ENCODE measurements at regions of chr21 and their contacts with region 1.

Region 1: DNA sequence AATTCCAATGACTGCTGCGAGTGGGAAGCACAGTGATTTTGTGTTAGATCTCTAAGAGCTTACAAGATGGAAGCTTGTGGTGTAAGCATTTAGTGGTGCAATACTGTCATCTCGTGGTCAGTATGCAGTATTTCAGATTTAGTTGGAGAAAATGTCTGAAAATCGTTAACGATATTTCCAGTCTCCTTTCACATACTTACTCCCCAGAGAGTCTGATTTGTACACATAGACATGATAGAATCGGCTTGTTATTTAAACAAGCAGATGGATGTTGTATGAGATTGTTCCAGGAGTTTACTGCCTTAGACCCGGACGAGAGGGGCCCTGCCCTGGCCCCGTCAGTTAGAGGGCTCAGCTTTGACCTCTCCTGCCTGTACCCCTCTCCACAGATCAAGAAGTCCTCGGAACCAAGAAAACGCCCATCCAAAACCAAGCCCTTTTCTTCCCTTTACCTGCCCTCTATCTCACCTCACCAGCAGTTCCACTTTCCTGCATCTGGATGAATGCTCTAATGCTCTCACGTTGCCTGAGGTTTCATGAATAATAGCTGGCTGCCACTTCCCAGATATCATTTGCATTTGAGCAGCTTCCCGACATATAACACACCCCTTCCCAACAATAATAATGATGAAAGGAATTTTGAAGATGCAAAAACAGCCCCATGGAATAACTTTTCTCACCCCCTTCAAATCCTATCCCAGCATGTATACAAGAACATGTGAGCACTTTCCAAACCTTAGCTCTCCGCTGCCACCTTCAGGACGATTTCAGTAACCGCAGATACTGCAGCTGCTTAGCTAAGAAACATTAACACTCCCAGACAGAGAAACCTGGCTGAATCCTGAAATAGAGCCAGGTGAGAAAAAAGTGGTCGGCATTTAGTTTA is 247.3 kb downstream of the LTN1 start:
- DNase-seq: peak; percentile 70
- ATAC-seq: peak; percentile 94

Region 2: DNA sequence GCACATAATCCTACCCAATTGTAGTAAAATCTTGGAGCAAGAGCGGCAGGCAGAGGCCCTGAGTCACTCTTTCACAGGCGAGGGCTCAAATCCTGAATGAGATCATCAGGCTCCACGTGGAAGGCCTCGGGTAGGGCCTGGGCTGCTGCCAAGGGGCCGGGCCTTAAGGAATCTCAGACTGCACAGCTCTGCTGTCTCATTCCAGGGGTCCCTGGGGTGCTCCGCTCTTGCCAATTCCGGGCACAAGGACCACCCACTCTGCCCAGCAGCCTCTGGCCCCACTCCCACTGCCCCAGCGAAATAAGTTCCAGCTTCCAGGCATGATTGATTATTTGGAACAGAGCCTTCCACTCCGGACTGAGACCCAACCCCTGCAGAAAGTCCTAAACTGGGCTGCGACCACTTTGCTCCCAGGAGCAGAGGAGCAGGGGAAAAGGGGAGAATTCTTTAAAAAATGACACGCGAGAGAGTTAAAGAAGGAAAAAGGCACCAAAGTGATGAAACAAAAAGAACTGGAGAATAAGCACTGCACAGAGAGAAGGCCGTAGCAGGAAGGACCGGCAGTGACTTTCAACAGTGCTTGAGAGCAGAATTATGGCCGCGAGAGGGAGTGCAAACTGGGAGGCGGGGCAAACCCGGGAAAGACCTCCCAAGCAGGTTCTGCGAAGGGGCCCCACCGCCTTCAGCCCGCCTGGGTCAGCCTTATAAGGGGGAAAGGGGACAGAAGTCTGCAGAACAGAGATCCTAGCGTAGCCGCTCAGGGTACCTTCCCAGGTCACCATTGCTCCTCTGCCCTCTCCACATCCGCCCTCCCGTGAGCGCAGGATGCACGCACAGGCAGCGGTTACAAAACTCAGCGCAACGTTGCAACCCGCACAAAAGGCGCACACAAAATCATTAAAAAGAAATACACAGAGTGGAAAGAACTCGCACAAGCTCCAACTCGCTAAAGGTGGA is 1902.1 kb before region 1 on chr21:
- intact Hi-C with region 1: loop called (anchors 5 kb)
- DNase-seq: peak; percentile 96
- ATAC-seq: peak; percentile 60

Region 3: DNA sequence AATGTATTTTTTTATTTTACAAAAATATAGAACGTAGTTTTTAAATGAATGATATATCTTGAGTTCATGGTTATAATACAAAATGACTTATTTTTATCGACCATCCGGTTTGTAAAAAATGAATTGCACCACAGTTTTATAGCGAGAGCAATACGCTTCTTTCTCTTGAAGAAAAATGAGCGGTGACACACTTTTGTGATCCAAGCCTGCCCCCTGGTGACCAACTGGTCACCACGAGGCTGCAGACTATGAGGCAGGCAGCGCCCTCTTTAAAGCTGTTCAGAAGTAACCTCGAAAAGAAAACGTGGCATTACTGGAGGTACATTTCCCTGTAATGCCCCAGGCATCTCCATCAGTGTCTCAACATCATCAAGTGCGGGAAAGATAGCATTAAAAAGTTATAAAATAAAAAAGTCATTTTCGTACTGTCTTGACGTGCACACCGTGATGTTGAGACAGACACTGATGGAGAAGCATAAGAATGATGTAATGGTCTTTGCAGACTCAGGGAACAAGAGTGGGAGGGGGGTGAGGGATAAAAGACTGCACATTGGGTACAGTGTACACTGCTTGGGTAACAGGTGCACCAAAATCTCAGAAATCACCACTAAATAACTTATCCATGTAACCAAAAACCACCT is 1044.3 kb before region 1 on chr21:
- intact Hi-C with region 1: loop called (anchors 5 kb)
- DNase-seq: peak; percentile 86
- ATAC-seq: peak; percentile 94

Region 4: DNA sequence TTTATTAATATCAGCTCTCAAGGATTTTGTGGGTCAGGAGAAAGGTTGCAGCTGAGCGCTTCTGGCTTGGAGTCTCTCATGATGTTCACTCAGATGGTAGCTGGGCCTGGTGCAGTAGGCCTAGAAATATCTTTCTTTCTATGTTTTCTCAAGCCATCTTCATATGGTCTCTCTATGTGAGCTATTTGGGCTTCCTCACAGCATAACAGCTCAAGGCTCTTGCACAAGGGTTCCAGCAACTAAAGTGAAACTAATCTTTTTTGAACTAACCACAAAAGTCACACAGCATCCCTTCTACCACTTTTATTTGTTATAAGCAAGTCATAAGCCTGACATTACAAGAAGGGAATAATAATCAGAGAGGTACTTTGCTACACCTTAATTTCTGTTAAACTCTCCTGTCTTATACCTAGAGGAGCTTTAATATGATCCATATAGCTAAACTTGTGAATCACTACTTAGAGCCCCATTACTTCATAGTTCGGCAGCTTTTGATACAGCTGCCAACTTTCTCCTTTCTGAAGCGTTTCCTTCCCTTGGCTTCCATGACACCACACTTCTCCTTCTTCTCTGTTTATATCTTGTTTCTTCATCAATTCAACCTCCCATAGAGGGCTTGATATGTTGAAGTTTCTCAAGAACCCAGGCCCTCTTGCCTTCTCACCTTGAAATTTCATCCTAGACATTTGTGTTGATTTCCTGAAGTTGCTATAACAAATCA is 472.9 kb before region 1 on chr21:
- intact Hi-C with region 1: no loop called
- DNase-seq: no peak
- ATAC-seq: no peak

Region 5: DNA sequence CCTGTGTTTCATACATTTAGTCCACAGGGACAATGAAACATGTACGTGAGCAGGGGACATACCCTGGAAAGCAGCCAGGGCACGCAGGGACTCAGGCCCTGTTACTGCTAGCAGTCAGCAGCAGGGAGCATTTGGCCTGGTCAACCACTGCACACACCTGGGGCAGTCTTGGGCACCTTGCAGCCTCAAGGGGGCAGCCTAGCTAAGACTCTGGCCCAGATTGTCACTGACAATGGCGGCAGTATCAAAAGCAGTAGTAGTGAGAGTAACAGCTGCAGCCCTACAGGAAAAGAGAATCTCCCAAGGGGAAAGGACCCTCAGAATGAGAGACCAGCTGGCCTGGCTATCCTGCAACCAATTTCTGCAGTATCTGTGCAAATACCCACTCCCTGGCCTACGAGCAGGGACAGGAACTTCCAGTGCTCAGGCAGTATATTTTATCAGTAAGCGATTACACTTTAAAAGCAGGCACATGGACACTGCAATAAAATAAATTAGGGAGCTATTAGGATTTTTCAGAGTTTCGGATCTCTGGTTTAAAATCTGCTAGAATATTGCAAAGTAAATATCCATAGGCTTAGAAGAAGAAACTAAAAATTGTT is 228.3 kb before region 1 on chr21:
- intact Hi-C with region 1: loop called (anchors 5 kb)
- DNase-seq: peak; percentile 79
- ATAC-seq: peak; percentile 97

Region 6: DNA sequence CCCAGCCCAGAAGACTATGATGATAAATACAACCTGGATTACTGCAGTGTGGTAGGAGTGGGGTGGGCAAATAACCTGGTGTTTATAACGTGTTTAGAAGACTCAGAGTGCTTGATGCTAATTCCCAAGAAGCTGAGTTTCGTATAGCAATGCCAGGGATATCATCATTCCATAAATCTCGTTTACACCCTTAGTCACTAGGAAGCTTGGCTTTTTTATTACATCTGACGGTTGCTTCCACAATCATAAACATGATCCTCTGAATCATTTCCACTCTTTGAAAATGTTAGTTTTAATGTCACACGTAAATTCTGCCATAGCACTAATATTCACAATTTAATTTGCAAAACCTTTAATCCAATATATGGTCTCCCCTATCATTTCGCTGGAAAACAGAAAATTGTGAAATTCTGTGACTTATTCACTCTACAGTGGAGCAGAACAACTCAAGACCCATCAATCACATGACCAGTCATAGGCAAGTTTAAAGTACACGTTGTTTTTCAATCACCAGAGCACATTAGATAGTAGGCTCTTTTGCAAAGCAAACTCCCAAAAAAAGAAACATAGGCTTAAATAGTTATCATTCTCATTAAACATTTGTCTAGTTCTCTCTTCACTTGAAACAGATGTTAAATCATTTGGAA is 73.7 kb before region 1 on chr21:
- intact Hi-C with region 1: no loop called
- DNase-seq: no peak
- ATAC-seq: no peak

Region 7: DNA sequence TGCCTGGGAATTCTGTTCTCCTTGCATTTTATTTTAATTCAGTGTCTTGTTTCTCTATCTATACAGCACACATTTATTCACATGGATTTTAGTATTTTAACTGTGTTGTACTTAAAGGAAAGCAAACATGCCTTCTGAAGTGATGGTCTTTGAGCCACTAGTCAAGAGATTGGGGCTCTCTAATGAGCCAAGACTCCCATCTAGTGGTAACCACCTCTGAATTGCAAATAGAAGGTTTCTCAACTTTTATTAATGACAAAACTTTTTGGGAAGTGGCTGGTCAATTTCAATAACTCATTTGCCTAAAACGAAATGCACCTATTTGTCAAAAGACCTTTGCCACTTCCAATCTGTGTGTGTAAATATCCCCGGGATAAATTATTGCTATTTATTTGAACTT is 47.7 kb after region 1 on chr21:
- intact Hi-C with region 1: loop called (anchors 10 kb)
- DNase-seq: no peak
- ATAC-seq: peak; percentile 82

Measured in Right ventricle myocardium superior (tissue), 1 donor.